ENCODE measurements at regions of chr6 and their contacts with region 1.

Region 1: GRCh38 chr6:84227434-84228197 is at the start of gene CEP162:
- DNase-seq: peak; percentile 57
- H3K4me3 ChIP-seq: peak within 1 kb of the TSS; percentile 96
- H3K27ac ChIP-seq: peak within 1 kb of the TSS; percentile 68
- H3K27me3 ChIP-seq: no peaks in the 10 kb centered on the region
- CTCF ChIP-seq: peak; percentile 81
- polyA plus RNA-seq, gene CEP162: 2.4 and 5.3 TPM in 2 replicates

Region 2: GRCh38 chr6:83615025-83615999 is 612.3 kb before region 1 on chr6:
- CTCF ChIA-PET with region 1: interaction called, 37 read pairs
- POLR2A ChIA-PET with region 1: interaction called, 3 read pairs
- DNase-seq: peak; percentile 1
- H3K4me3 ChIP-seq: no peak overlapping the region
- H3K27ac ChIP-seq: no peak overlapping the region
- H3K27me3 ChIP-seq: no peaks in the 10 kb centered on the region
- CTCF ChIP-seq: peak; percentile 68

Region 3: GRCh38 chr6:83884523-83884922 is 343.1 kb before region 1 on chr6:
- CTCF ChIA-PET with region 1: interaction called, 108 read pairs
- POLR2A ChIA-PET with region 1: no interaction called
- DNase-seq: no peak
- H3K4me3 ChIP-seq: no peak overlapping the region
- H3K27ac ChIP-seq: no peak overlapping the region
- H3K27me3 ChIP-seq: no peaks in the 10 kb centered on the region
- CTCF ChIP-seq: peak; percentile 67

Region 4: GRCh38 chr6:83908813-83909212 is 318.8 kb before region 1 on chr6:
- CTCF ChIA-PET with region 1: no interaction called
- POLR2A ChIA-PET with region 1: no interaction called
- DNase-seq: no peak
- H3K4me3 ChIP-seq: no peak overlapping the region
- H3K27ac ChIP-seq: no peak overlapping the region
- H3K27me3 ChIP-seq: no peaks in the 10 kb centered on the region
- CTCF ChIP-seq: no peak

Region 5: GRCh38 chr6:84161190-84161589 is 66.4 kb before region 1 on chr6:
- CTCF ChIA-PET with region 1: interaction called, 10 read pairs
- POLR2A ChIA-PET with region 1: no interaction called
- DNase-seq: no peak
- H3K4me3 ChIP-seq: no peak overlapping the region
- H3K27ac ChIP-seq: no peak overlapping the region
- H3K27me3 ChIP-seq: no peaks in the 10 kb centered on the region
- CTCF ChIP-seq: no peak

Region 6: GRCh38 chr6:84197708-84198107 is 29.9 kb before region 1 on chr6:
- CTCF ChIA-PET with region 1: interaction called, 12 read pairs
- POLR2A ChIA-PET with region 1: no interaction called
- DNase-seq: no peak
- H3K4me3 ChIP-seq: no peak overlapping the region
- H3K27ac ChIP-seq: no peak overlapping the region
- H3K27me3 ChIP-seq: no peaks in the 10 kb centered on the region
- CTCF ChIP-seq: no peak

Region 7: GRCh38 chr6:84213217-84213616 is 14.4 kb before region 1 on chr6:
- CTCF ChIA-PET with region 1: interaction called, 13 read pairs
- POLR2A ChIA-PET with region 1: no interaction called
- DNase-seq: no peak
- H3K4me3 ChIP-seq: no peak overlapping the region
- H3K27ac ChIP-seq: no peak overlapping the region
- H3K27me3 ChIP-seq: no peaks in the 10 kb centered on the region
- CTCF ChIP-seq: no peak

Region 8: GRCh38 chr6:84278321-84278998 is 50.8 kb after region 1 on chr6:
- CTCF ChIA-PET with region 1: no interaction called
- POLR2A ChIA-PET with region 1: no interaction called
- DNase-seq: no peak
- H3K4me3 ChIP-seq: no peak overlapping the region
- H3K27ac ChIP-seq: no peak overlapping the region
- H3K27me3 ChIP-seq: no peaks in the 10 kb centered on the region
- CTCF ChIP-seq: no peak

Region 9: DNA sequence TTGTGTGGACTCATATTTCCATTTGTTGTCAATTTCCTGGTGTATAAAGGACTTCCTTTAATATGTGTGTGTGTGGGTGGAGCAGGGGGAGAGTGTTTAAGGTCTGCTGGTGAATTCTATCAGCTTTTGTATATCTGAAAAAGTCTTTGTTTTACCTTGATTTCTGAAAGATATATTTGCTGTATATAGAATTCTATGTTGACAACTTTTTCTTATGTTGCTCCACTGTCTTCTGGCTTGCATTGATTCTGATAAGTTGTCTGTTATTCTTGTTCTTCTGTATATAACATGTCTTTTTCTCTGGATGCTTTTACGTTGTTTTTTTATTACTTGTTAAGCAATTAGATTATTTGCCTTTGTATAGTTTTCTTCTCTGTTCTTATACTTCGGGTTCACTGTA is 89.8 kb after region 1 on chr6:
- CTCF ChIA-PET with region 1: no interaction called
- POLR2A ChIA-PET with region 1: no interaction called
- DNase-seq: no peak
- H3K4me3 ChIP-seq: no peak overlapping the region
- H3K27ac ChIP-seq: no peak overlapping the region
- H3K27me3 ChIP-seq: no peaks in the 10 kb centered on the region
- CTCF ChIP-seq: no peak

Region 10: GRCh38 chr6:85033547-85033946 is 805.9 kb after region 1 on chr6:
- CTCF ChIA-PET with region 1: no interaction called
- POLR2A ChIA-PET with region 1: no interaction called
- DNase-seq: no peak
- H3K4me3 ChIP-seq: no peak overlapping the region
- H3K27ac ChIP-seq: no peak overlapping the region
- H3K27me3 ChIP-seq: no peaks in the 10 kb centered on the region
- CTCF ChIP-seq: no peak

Measured in AG04450 (cell line).